ENCODE measurements at regions of chr13 and their contacts with region 1.

Region 1: GRCh38 chr13:46796515-46797474 is at the start of gene ESD:
- DNase-seq: peak; percentile 80 to 96 (median 88)
- ATAC-seq: peak; percentile 93
- H3K4me3 ChIP-seq: peak within 1 kb of the TSS; percentile 93
- H3K4me3 Mint-ChIP-seq: peak within 1 kb of the TSS; percentile 89
- H3K27ac ChIP-seq: peak within 1 kb of the TSS; percentile 71 to 83
- H3K27ac Mint-ChIP-seq: peak within 1 kb of the TSS; percentile 94
- H3K4me1 ChIP-seq: peaks cover 25% of the 10 kb centered on the region
- H3K4me1 Mint-ChIP-seq: peaks cover 43% of the 10 kb centered on the region
- H3K27me3 ChIP-seq: no peaks in the 10 kb centered on the region
- H3K27me3 Mint-ChIP-seq: no peaks in the 10 kb centered on the region
- CTCF ChIP-seq: no peak
- total RNA-seq, gene ESD: 30.8 to 34.1 TPM

Region 2: GRCh38 chr13:45015300-45015699 is 1781.5 kb before region 1 on chr13:
- CTCF ChIA-PET with region 1: no interaction called
- POLR2A ChIA-PET with region 1: no interaction called
- intact Hi-C with region 1: no loop called
- DNase-seq: no peak
- ATAC-seq: no peak
- H3K4me3 ChIP-seq: no peak overlapping the region
- H3K4me3 Mint-ChIP-seq: no peak overlapping the region
- H3K27ac ChIP-seq: no peak overlapping the region
- H3K27ac Mint-ChIP-seq: no peak overlapping the region
- H3K4me1 ChIP-seq: no peaks in the 10 kb centered on the region
- H3K4me1 Mint-ChIP-seq: no peaks in the 10 kb centered on the region
- H3K27me3 ChIP-seq: no peaks in the 10 kb centered on the region
- H3K27me3 Mint-ChIP-seq: no peaks in the 10 kb centered on the region
- CTCF ChIP-seq: no peak

Region 3: GRCh38 chr13:46751811-46752635 is 44.8 kb before region 1 on chr13:
- CTCF ChIA-PET with region 1: no interaction called
- POLR2A ChIA-PET with region 1: no interaction called
- intact Hi-C with region 1: loop called in 1 of 2 experiments (anchors 1 kb)
- DNase-seq: peak; percentile 1 to 86 (median 25)
- ATAC-seq: peak; percentile 91
- H3K4me3 ChIP-seq: no peak overlapping the region
- H3K4me3 Mint-ChIP-seq: peak overlapping the region; percentile 12
- H3K27ac ChIP-seq: no peak overlapping the region
- H3K27ac Mint-ChIP-seq: peak overlapping the region; percentile 68
- H3K4me1 ChIP-seq: peaks cover 6% of the 10 kb centered on the region
- H3K4me1 Mint-ChIP-seq: peaks cover 32% of the 10 kb centered on the region
- H3K27me3 ChIP-seq: no peaks in the 10 kb centered on the region
- H3K27me3 Mint-ChIP-seq: no peaks in the 10 kb centered on the region
- CTCF ChIP-seq: no peak

Region 4: DNA sequence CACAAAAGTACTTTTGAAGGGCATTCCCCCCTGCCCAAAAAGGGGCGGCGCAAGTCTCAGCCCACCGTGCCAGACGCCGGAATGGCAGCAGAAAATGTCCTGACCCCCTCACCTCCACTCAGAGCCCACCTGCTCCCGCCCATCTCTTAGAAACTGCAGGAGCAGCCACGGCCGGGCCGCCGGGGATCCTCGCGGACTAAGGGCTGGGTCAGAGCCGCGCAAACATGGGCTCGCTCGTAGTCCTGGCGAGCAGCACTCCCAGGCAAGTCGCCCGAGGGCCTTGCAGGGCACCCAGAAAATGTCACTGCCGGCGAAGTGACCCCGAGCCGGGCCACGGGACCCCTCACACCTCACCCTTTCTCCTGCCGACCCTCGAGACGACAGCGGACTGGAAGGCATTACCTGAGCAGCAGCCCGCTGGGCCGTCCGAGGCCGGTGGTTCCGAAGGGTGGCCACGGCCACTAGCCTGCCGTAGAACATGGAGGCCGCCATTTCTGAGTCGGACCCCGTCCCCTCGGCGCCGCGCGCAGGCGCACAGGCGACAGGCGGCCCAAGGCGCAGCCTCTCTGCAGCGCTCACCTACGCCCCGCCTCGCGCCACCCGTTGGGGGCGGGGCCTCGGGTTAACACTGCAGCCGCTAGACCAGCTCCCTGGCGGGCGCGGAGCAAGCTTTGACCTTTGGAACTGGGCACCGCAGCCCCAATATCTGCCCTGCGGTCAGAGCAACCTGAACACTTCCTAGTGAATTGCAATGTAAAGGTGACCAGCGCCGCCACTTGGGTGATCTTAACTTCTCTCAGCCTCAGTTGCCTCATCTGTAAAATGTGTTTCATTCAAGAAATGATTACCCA is 1204.2 kb after region 1 on chr13 and contains the start of gene SUCLA2:
- CTCF ChIA-PET with region 1: no interaction called
- POLR2A ChIA-PET with region 1: no interaction called
- intact Hi-C with region 1: loop called in 1 of 2 experiments (anchors 10 kb)
- DNase-seq: peak; percentile 76 to 94 (median 88)
- ATAC-seq: peak; percentile 99
- H3K4me3 ChIP-seq: peak within 1 kb of the TSS; percentile 99
- H3K4me3 Mint-ChIP-seq: peak within 1 kb of the TSS; percentile 96
- H3K27ac ChIP-seq: peak within 1 kb of the TSS; percentile 58
- H3K27ac Mint-ChIP-seq: peak within 1 kb of the TSS; percentile 90
- H3K4me1 ChIP-seq: peaks cover 6% of the 10 kb centered on the region
- H3K4me1 Mint-ChIP-seq: peaks cover 46% of the 10 kb centered on the region
- H3K27me3 ChIP-seq: no peaks in the 10 kb centered on the region
- H3K27me3 Mint-ChIP-seq: no peaks in the 10 kb centered on the region
- CTCF ChIP-seq: no peak
- total RNA-seq, gene SUCLA2: 18.7 to 21.4 TPM

Measured in CD4-positive, alpha-beta T cell (primary cell).